Activated naive CD4-positive, alpha-beta T cell treated with anti-CD3 and anti-CD28 coated beads for 36 hours (primary cell): ENCODE measurements at regions of chr19 and their contacts with region 1.

Region 1: GRCh38 chr19:13880059-13881043 is 3.4 kb downstream of the NANOS3 start:
- DNase-seq: peak; percentile 99
- H3K4me3 Mint-ChIP-seq: peak overlapping the region; percentile 45
- H3K27ac Mint-ChIP-seq: peak overlapping the region; percentile 77
- H3K4me1 Mint-ChIP-seq: peaks cover 34% of the 10 kb centered on the region
- H3K27me3 Mint-ChIP-seq: no peaks in the 10 kb centered on the region

Region 2: GRCh38 chr19:13652810-13653590 is 227.4 kb before region 1 on chr19:
- CTCF ChIA-PET with region 1: no interaction called
- intact Hi-C with region 1: no loop called
- DNase-seq: no peak
- H3K4me3 Mint-ChIP-seq: no peak overlapping the region
- H3K27ac Mint-ChIP-seq: peak overlapping the region; percentile 10
- H3K4me1 Mint-ChIP-seq: peaks cover 4% of the 10 kb centered on the region
- H3K27me3 Mint-ChIP-seq: no peaks in the 10 kb centered on the region

Region 3: GRCh38 chr19:13833330-13834243 is 46.8 kb before region 1 on chr19:
- CTCF ChIA-PET with region 1: no interaction called
- intact Hi-C with region 1: no loop called
- DNase-seq: peak; percentile 98
- H3K4me3 Mint-ChIP-seq: peak overlapping the region; percentile 84
- H3K27ac Mint-ChIP-seq: peak overlapping the region; percentile 99
- H3K4me1 Mint-ChIP-seq: peaks cover 35% of the 10 kb centered on the region
- H3K27me3 Mint-ChIP-seq: no peaks in the 10 kb centered on the region

Region 4: DNA sequence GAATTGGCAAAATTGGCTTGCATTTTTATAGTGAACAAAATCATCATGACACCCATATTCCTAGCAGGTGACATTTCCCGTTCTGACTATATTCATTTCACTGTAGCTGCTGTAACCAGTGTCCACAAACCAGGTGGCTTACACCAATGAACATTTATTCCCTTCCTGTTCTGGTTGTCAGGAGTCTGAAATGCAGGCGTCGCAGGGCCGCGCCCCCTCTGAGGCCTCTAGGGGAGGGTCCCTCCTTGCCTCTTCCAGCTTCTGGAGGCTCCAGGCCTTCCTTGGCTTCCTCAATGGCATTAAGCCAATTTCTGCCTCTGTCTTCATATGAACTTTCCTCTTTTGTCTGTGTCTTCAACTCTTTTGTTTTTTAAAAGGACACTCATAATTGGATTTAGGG is 141.1 kb after region 1 on chr19:
- CTCF ChIA-PET with region 1: no interaction called
- intact Hi-C with region 1: no loop called
- DNase-seq: no peak
- H3K4me3 Mint-ChIP-seq: no peak overlapping the region
- H3K27ac Mint-ChIP-seq: no peak overlapping the region
- H3K4me1 Mint-ChIP-seq: peaks cover 9% of the 10 kb centered on the region
- H3K27me3 Mint-ChIP-seq: no peaks in the 10 kb centered on the region

Region 5: DNA sequence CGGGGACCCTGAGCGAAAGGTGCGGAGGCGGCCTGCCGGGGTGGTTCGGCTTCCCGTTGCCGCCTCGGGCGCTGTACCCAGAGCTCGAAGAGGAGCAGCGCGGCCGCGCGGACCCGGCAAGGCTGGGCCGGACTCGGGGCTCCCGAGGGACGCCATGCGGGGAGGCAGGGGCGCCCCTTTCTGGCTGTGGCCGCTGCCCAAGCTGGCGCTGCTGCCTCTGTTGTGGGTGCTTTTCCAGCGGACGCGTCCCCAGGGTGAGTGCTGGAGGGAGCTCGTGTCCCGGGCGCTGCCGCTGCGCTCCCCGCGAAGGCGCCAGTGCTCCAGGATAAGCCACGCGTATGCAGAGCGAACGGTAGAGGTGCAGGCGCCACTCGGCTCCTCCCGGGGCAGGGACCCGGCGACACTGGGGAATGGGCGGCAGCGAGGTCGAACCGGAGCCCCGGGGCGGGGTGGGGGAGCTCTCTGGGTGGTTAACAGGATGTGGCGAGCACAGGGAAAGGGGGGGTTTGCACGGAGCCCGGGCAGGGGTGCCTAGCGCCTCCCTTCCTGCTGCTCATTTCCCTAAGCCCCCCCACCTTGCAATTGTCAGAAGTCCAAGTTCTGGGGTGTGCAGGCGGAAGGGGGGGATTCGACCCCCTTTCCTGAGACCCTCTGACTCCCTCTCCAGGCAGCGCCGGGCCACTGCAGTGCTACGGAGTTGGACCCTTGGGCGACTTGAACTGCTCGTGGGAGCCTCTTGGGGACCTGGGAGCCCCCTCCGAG is 151.5 kb after region 1 on chr19 and contains the start of gene IL27RA:
- CTCF ChIA-PET with region 1: interaction called, 7 read pairs
- intact Hi-C with region 1: loop called (anchors 1 kb)
- DNase-seq: peak; percentile 84
- H3K4me3 Mint-ChIP-seq: peak within 1 kb of the TSS; percentile 88
- H3K27ac Mint-ChIP-seq: peak within 1 kb of the TSS; percentile 92
- H3K4me1 Mint-ChIP-seq: peaks cover 26% of the 10 kb centered on the region
- H3K27me3 Mint-ChIP-seq: no peaks in the 10 kb centered on the region
- total RNA-seq, gene IL27RA: 59.3 to 59.4 TPM

Region 6: GRCh38 chr19:14073261-14073924 is 193.0 kb after region 1 on chr19:
- CTCF ChIA-PET with region 1: interaction called, 12 read pairs
- intact Hi-C with region 1: loop called (anchors 1 kb)
- DNase-seq: peak; percentile 75
- H3K4me3 Mint-ChIP-seq: peak overlapping the region; percentile 80
- H3K27ac Mint-ChIP-seq: no peak overlapping the region
- H3K4me1 Mint-ChIP-seq: peaks cover 10% of the 10 kb centered on the region
- H3K27me3 Mint-ChIP-seq: peaks cover 4% of the 10 kb centered on the region

Region 7: GRCh38 chr19:14117668-14118164 is 237.4 kb after region 1 on chr19 and contains the start of gene PRKACA:
- CTCF ChIA-PET with region 1: interaction called, 7 read pairs
- intact Hi-C with region 1: loop called (anchors 1 kb)
- DNase-seq: peak; percentile 99
- H3K4me3 Mint-ChIP-seq: peak within 1 kb of the TSS; percentile 86
- H3K27ac Mint-ChIP-seq: peak within 1 kb of the TSS; percentile 78
- H3K4me1 Mint-ChIP-seq: peaks cover 43% of the 10 kb centered on the region
- H3K27me3 Mint-ChIP-seq: no peaks in the 10 kb centered on the region
- total RNA-seq, gene PRKACA: 48.2 to 60.0 TPM

Region 8: GRCh38 chr19:14595516-14595915 is 715.2 kb after region 1 on chr19:
- CTCF ChIA-PET with region 1: no interaction called
- intact Hi-C with region 1: no loop called
- DNase-seq: no peak
- H3K4me3 Mint-ChIP-seq: no peak overlapping the region
- H3K27ac Mint-ChIP-seq: no peak overlapping the region
- H3K4me1 Mint-ChIP-seq: no peaks in the 10 kb centered on the region
- H3K27me3 Mint-ChIP-seq: peaks cover 4% of the 10 kb centered on the region